ENCODE measurements at regions of chr17 and their contacts with region 1.

Region 1: GRCh38 chr17:20992987-20993862 is 49.6 kb downstream of the USP22 start:
- DNase-seq: peak; percentile 53 to 56
- ATAC-seq: peak; percentile 24 to 73 (median 62)
- H3K4me3 ChIP-seq: peak overlapping the region in 4 of 10 donors; percentile 1 to 30 (median 12)
- H3K27ac ChIP-seq: peak overlapping the region in 4 of 10 donors; percentile 26 to 44 (median 40)
- H3K4me1 ChIP-seq: peaks cover 1 to 31% (median 14%) of the 10 kb centered on the region in 9 donors
- H3K27me3 ChIP-seq: no peaks in the 10 kb centered on the region
- CTCF ChIP-seq: peak; percentile 87 to 91 (median 89)

Region 2: GRCh38 chr17:20797292-20797691 is 195.9 kb before region 1 on chr17:
- intact Hi-C with region 1: loop called in 3 of 10 experiments (anchors 5 to 10 kb)
- DNase-seq: no peak
- ATAC-seq: no peak
- H3K4me3 ChIP-seq: no peak overlapping the region
- H3K27ac ChIP-seq: no peak overlapping the region
- H3K4me1 ChIP-seq: no peaks in the 10 kb centered on the region
- H3K27me3 ChIP-seq: peaks cover 0 to 28% (median 8%) of the 10 kb centered on the region in 7 donors
- CTCF ChIP-seq: no peak

Region 3: GRCh38 chr17:20825539-20825938 is 167.7 kb before region 1 on chr17:
- intact Hi-C with region 1: no loop called
- DNase-seq: no peak
- ATAC-seq: no peak
- H3K4me3 ChIP-seq: no peak overlapping the region
- H3K27ac ChIP-seq: no peak overlapping the region
- H3K4me1 ChIP-seq: no peaks in the 10 kb centered on the region
- H3K27me3 ChIP-seq: peaks cover 0 to 16% (median 3%) of the 10 kb centered on the region in 7 donors
- CTCF ChIP-seq: no peak

Region 4: DNA sequence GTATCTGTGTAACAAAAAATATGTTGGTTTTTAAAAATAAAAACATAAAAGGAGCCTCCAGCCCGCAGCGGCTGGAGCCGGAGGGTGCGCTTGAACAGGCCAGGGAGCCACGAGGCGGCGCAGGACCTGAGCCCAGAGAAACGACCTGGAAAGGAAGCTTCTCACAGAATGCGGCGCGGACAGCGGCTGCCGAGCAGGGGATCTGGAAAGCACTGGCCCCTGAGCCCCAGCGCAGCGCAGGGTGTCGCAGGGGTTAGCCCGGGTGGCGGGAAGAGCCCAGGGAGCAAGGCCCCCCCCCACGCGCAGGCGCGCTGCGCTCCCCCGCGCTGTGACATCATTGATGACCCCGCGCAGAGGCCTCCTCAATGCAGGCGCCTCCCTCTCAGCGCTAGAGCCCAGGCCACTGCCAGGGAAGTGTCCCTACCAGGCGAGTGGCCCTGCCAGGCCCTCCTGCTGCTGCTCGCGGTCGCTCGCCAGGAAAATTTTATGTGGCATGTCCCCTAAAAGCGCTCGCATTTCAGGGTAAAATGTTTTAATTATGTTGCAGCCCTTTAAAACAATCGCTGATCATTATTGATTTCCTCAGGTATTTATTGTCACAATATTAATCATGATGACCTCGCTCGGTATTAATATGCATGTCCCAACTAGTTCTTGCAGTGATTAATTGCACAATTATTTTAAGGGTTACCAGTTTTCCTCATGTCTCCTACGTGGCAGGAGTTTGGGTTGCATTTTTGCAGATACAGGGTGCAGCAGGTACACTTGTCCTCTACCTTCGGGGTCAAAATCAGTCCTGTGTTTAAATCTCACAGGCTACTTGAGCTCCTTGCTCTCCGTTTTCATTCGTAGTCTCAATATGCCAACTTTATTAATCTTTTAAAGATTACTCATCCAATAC is 84.6 kb before region 1 on chr17:
- intact Hi-C with region 1: loop called in 4 of 10 experiments (anchors 2 to 10 kb)
- DNase-seq: peak; percentile 92 to 94
- ATAC-seq: peak; percentile 100
- H3K4me3 ChIP-seq: peak overlapping the region in 9 of 10 donors; percentile 32 to 63 (median 54)
- H3K27ac ChIP-seq: peak overlapping the region; percentile 52 to 94 (median 88)
- H3K4me1 ChIP-seq: peaks cover 0 to 15% (median 10%) of the 10 kb centered on the region in 9 donors
- H3K27me3 ChIP-seq: peaks cover 0 to 4% (median 0%) of the 10 kb centered on the region in 7 donors
- CTCF ChIP-seq: peak; percentile 13 to 83 (median 58)

Region 5: GRCh38 chr17:20914658-20915057 is 78.6 kb before region 1 on chr17:
- intact Hi-C with region 1: loop called in 4 of 10 experiments (anchors 2 to 10 kb)
- DNase-seq: no peak
- ATAC-seq: no peak
- H3K4me3 ChIP-seq: no peak overlapping the region
- H3K27ac ChIP-seq: no peak overlapping the region
- H3K4me1 ChIP-seq: no peaks in the 10 kb centered on the region
- H3K27me3 ChIP-seq: no peaks in the 10 kb centered on the region
- CTCF ChIP-seq: no peak

Region 6: GRCh38 chr17:20935740-20936139 is 57.5 kb before region 1 on chr17:
- intact Hi-C with region 1: loop called in 1 of 10 experiments (anchors 10 kb)
- DNase-seq: no peak
- ATAC-seq: peak in 6 of 8 donors; percentile 53 to 87 (median 70)
- H3K4me3 ChIP-seq: no peak overlapping the region
- H3K27ac ChIP-seq: peak overlapping the region in 8 of 10 donors; percentile 25 to 79 (median 44)
- H3K4me1 ChIP-seq: peaks cover 0 to 32% (median 16%) of the 10 kb centered on the region in 9 donors
- H3K27me3 ChIP-seq: no peaks in the 10 kb centered on the region
- CTCF ChIP-seq: no peak

Region 7: DNA sequence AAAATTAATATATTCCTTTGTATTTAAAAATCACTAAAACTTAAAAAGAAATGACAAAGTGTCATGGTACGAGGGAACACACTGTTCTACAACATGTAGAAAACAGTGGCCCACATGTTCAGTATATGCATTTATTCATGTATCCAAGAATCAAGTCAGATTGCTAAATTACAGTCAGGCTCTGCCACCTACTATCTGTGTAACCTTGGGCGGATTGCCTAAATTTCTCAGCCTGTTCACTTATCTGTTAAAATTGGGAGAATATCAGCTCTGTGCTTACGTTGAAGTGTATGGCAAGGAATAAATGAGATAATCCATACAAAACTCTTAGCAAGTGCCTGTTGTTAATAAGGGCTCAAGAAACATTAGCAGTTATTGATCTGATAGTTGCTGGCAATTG is 53.0 kb after region 1 on chr17:
- intact Hi-C with region 1: no loop called
- DNase-seq: no peak
- ATAC-seq: no peak
- H3K4me3 ChIP-seq: no peak overlapping the region
- H3K27ac ChIP-seq: no peak overlapping the region
- H3K4me1 ChIP-seq: peaks cover 0 to 12% (median 8%) of the 10 kb centered on the region in 9 donors
- H3K27me3 ChIP-seq: no peaks in the 10 kb centered on the region
- CTCF ChIP-seq: no peak

Region 8: GRCh38 chr17:21160401-21160800 is 167.2 kb after region 1 on chr17:
- intact Hi-C with region 1: no loop called
- DNase-seq: no peak
- ATAC-seq: no peak
- H3K4me3 ChIP-seq: no peak overlapping the region
- H3K27ac ChIP-seq: peak overlapping the region in 1 of 10 donors; percentile 60
- H3K4me1 ChIP-seq: peaks cover 5 to 38% (median 21%) of the 10 kb centered on the region in 9 donors
- H3K27me3 ChIP-seq: no peaks in the 10 kb centered on the region
- CTCF ChIP-seq: no peak

Measured in heart right ventricle (tissue), 16 donors.